SK-N-SH (cell line): ENCODE measurements at regions of chr9 and their contacts with region 1.

Region 1: DNA sequence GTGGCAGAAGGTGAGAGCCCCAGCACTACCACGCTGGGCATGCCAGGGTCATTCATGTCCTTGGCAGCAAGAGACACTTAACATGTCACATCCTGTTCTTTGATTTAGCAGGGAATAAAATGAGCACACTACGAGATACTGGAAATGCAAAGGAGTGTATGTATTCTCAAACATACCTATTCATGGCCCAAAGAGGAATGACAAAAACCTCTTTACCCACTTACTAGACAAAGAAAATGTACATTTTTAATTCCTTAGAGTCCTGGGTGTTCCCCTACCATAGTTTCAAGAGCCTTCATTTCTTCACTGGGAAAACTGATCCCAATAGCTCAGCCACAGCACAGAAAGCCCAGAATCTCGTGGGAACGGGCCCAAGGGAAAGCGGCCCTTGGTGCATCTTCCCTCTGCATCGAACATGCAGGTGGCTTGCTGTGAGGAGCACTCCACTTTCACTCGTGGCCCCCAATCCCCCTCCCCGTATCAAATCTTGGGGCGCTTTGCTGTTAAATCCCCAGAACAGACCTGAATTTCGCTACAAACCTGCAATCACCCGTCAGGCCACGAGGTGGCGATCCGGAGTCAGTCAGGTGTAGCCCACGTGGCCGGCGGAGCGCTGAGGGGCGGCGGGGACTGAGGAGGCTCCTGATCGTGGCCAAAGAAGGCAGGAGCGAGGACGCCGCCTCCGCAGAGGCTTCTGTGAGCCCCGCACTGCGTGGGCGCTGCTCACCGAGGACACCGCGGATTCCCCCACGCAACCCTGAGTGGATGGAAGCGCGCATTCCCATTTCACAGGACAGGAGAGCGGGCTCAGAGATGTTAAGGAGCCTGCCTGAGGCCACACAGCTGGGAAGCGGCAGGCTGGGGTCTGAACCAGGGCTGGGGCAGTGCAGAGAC is 91.4 kb downstream of the LMX1B start:
- DNase-seq: peak; percentile 93
- H3K4me3 ChIP-seq: peak overlapping the region in 1 of 2 experiments; percentile 34; a peak in 1 of 4 replicates
- H3K27ac ChIP-seq: no peak overlapping the region
- H3K4me1 ChIP-seq: peaks cover 0 to 5% of the 10 kb centered on the region in 2 experiments; a peak in 1 of 4 replicates
- H3K27me3 ChIP-seq: peaks cover 34% of the 10 kb centered on the region; the same call in 1 of the 2 replicates
- CTCF ChIP-seq: peak; percentile 82
- EP300 ChIP-seq: no peak
- RAD21 ChIP-seq: peak; percentile 78

Region 2: GRCh38 chr9:125726456-125727132 is 978.5 kb before region 1 on chr9:
- CTCF ChIA-PET with region 1: no interaction called
- POLR2A ChIA-PET with region 1: no interaction called
- DNase-seq: no peak
- H3K4me3 ChIP-seq: no peak overlapping the region
- H3K27ac ChIP-seq: no peak overlapping the region
- H3K4me1 ChIP-seq: no peaks in the 10 kb centered on the region
- H3K27me3 ChIP-seq: no peaks in the 10 kb centered on the region
- CTCF ChIP-seq: no peak
- EP300 ChIP-seq: no peak
- RAD21 ChIP-seq: no peak

Region 3: GRCh38 chr9:126611592-126612325 is 93.4 kb before region 1 on chr9:
- CTCF ChIA-PET with region 1: interaction called, 42 read pairs
- POLR2A ChIA-PET with region 1: no interaction called
- DNase-seq: peak; percentile 94
- H3K4me3 ChIP-seq: peak overlapping the region in 1 of 2 experiments; percentile 36; a peak in 1 of 4 replicates
- H3K27ac ChIP-seq: no peak overlapping the region
- H3K4me1 ChIP-seq: no peaks in the 10 kb centered on the region; a peak in 1 of 4 replicates
- H3K27me3 ChIP-seq: peaks cover 88% of the 10 kb centered on the region
- CTCF ChIP-seq: peak; percentile 70
- EP300 ChIP-seq: no peak
- RAD21 ChIP-seq: peak; percentile 68

Region 4: GRCh38 chr9:126667190-126668055 is 37.7 kb before region 1 on chr9:
- CTCF ChIA-PET with region 1: interaction called, 29 read pairs
- POLR2A ChIA-PET with region 1: no interaction called
- DNase-seq: peak; percentile 85
- H3K4me3 ChIP-seq: no peak overlapping the region
- H3K27ac ChIP-seq: no peak overlapping the region
- H3K4me1 ChIP-seq: peaks cover 0 to 16% of the 10 kb centered on the region in 2 experiments; a peak in 1 of 4 replicates
- H3K27me3 ChIP-seq: peaks cover 12% of the 10 kb centered on the region; the same call in 1 of the 2 replicates
- CTCF ChIP-seq: no peak
- EP300 ChIP-seq: no peak
- RAD21 ChIP-seq: no peak

Region 5: DNA sequence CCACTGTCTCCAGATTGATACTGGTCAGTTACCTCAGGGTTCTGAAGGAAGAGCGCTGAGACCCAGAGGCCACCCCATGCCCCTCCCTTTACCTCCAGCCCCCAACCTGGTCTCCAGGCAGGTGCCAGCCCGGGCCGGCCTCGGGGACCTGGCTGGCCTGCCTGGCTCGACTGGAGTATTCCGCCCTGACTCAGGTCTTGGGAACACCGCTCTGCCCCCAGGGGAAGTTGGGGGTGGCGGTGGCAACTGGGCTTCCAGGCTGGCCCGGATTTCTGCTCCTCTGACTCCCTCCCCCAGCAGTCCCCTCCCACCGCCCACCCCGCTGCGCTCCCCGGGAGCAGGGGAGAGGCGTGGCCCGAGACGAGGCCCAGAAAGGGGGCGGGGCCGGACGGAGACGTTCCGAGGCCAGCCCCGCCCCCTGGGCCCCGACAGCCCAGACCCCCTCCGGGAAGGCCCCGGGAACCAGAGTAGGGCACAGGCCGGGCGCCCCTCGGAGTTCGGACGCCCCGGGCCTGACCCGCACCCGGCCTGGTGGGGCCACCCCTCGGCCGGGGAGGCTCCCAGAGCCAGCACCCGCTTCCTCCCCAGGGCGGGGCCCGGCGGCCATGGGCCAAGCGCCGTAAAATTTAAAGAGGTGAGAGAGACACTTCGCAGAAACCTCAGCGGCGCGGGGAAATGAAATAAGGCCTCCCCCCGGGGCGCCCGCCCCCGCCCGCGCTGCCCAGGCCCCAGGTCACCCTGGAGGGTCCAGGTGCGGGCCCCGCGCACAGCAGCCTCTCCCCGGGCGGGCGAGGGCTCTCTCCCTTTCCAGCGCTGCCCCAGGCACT is 17.3 kb after region 1 on chr9:
- CTCF ChIA-PET with region 1: interaction called, 66 read pairs
- POLR2A ChIA-PET with region 1: interaction called, 4 read pairs
- DNase-seq: peak; percentile 86
- H3K4me3 ChIP-seq: peak overlapping the region; percentile 52 to 54; a peak in 3 of 4 replicates
- H3K27ac ChIP-seq: peak overlapping the region in 1 of 2 experiments; percentile 94; a peak in 2 of 4 replicates
- H3K4me1 ChIP-seq: peaks cover 10 to 34% of the 10 kb centered on the region in 2 experiments; a peak in 2 of 4 replicates
- H3K27me3 ChIP-seq: peaks cover 12% of the 10 kb centered on the region; the same call in 1 of the 2 replicates
- CTCF ChIP-seq: no peak
- EP300 ChIP-seq: no peak
- RAD21 ChIP-seq: no peak

Region 6: GRCh38 chr9:126773004-126773607 is 68.0 kb after region 1 on chr9:
- CTCF ChIA-PET with region 1: interaction called, 502 read pairs
- POLR2A ChIA-PET with region 1: no interaction called
- DNase-seq: peak; percentile 52
- H3K4me3 ChIP-seq: no peak overlapping the region
- H3K27ac ChIP-seq: no peak overlapping the region
- H3K4me1 ChIP-seq: no peaks in the 10 kb centered on the region
- H3K27me3 ChIP-seq: no peaks in the 10 kb centered on the region
- CTCF ChIP-seq: peak; percentile 44
- EP300 ChIP-seq: no peak
- RAD21 ChIP-seq: peak; percentile 37

Region 7: GRCh38 chr9:127021664-127022363 is 316.7 kb after region 1 on chr9:
- CTCF ChIA-PET with region 1: no interaction called
- POLR2A ChIA-PET with region 1: no interaction called
- DNase-seq: peak; percentile 79
- H3K4me3 ChIP-seq: no peak overlapping the region
- H3K27ac ChIP-seq: peak overlapping the region; percentile 71 to 94
- H3K4me1 ChIP-seq: peaks cover 12 to 22% of the 10 kb centered on the region in 2 experiments; a peak in 3 of 4 replicates
- H3K27me3 ChIP-seq: no peaks in the 10 kb centered on the region
- CTCF ChIP-seq: no peak
- EP300 ChIP-seq: peak in 1 of 2 experiments; percentile 55; a peak in 1 of 4 replicates
- RAD21 ChIP-seq: peak; percentile 17; the same call in 1 of the 2 replicates